Adrenal gland (tissue), 19 donors: ENCODE measurements at regions of chr19 and their contacts with region 1.

Region 1: DNA sequence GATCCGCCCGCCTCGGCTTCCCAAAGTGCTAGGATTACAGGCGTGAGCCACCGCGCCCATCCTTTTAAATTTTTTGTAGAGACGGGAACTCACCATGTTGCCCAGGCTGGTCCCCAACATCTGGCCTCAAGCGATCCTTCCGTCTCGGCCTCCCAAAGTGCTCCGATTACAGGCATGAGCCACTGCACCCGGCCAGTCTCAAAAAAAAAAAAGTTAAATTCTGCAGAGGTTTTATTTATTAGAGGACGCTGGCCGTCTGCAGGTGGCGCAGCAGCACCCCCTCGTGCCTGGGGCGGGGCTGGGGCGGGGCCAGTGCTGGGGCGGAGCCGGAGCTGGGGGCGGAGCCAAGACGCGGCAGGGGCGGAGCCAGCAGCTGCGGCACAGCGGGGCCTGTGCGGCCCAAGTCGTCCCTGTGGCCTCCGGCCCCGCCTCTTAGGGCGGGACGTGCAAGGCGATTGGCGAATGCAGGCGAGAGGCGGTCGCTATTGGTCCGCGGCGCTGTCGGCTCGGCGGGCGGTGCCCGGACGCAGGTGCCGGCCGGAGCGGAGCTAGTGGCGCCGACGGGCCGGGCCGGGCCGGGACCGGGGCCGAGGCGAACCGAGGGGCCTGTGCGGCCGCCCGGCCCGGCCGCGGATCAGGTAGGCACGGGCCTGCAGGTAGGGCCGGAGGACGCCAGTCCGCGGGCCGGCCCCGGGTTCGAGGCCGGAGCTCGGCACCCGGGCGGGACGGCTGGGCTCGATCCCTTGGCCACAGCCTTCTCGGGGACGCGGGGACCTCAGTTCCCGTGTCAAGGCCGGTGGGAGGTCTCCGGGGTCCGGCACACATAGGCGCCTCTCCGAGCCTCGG is at the start of gene MARCHF2:
- DNase-seq: peak; percentile 97 to 98 (median 97)
- H3K4me3 ChIP-seq: peak within 1 kb of the TSS; percentile 27 to 98 (median 62)
- H3K27ac ChIP-seq: peak within 1 kb of the TSS in 2 of 5 donors; percentile 55 to 85
- H3K4me1 ChIP-seq: peaks cover 3 to 31% of the 10 kb centered on the region in 2 donors
- H3K27me3 ChIP-seq: no peaks in the 10 kb centered on the region
- CTCF ChIP-seq: peak; percentile 40 to 67 (median 53)
- POLR2A ChIP-seq: peak in 1 of 2 donors; percentile 74
- total RNA-seq, gene MARCHF2: 18.9 to 200 (median 61.6) TPM

Region 2: DNA sequence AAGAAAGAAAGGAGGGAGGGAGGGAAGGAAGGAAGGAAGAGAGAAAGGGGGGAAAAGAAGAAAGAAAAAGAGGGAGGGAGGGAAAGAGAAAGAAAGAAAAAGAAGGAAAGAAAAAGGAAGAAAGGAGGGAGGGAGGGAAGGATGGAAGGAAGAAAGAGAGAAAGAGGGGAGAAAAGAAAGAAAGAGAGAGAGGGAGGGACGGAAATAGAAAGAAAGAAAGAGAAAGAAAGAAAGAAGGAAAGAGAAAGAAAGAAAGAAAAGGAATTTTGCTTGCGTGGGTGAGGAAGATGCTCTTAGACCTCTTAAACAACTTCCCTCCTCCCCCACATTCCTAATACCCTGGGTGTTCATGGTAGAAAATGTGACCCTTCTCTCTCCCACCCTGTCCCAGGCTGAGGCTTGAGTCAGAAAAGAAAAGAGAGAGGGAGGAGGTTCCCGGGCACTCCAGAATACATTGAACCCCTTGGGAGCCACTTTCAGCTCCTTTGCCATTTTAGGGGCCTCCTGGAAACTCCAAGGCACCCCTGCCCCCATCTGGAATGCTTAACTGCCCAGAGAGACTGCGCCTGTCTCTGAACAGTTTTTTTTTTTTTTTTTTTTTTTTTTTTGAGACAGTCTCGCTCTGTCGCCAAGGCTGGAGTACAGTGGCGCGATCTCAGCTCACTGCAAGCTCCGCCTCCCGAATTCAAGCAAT is 60.7 kb before region 1 on chr19:
- intact Hi-C with region 1: no loop called
- DNase-seq: peak in 1 of 7 donors; percentile 49
- H3K4me3 ChIP-seq: no peak overlapping the region
- H3K27ac ChIP-seq: peak overlapping the region in 1 of 5 donors; percentile 5
- H3K4me1 ChIP-seq: peaks cover 5 to 18% of the 10 kb centered on the region in 2 donors
- H3K27me3 ChIP-seq: no peaks in the 10 kb centered on the region
- CTCF ChIP-seq: no peak
- POLR2A ChIP-seq: no peak

Region 3: DNA sequence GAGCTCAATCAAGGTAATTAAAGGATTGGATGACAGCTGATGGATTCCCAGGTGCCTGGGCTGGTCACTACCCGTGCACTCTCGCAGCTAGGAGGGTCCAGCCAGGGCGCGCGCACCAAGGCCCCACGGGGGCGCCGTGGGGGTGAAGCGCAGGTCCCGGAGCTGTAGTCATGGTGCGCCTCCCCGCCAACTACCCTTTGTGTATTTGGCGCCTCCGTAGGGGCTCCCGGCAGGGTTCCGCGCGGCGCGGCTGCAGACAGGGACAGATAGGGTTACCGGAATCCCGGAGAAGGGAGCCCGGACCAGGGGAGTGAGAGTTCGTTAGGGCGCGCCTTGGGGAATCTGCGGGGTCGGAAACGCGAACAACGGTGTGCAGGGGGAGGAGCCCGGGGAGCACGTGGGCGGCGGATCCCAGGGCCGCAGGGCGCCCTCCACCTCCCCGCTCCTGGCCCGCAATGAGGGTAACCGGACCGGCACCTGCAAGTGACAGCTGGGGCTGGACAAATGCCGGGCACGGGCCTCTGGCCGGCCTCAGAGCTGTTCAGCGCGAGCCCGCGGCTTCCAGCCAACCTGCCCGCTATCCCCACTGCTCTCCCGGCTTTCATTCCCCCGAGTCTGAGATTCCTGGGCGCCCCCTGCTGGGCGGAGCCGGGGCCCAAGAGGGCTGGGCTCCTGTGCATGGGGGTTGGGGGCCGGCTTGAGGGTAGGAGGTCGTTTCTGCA is 92.8 kb after region 1 on chr19:
- intact Hi-C with region 1: loop called (anchors 5 kb)
- DNase-seq: peak; percentile 72 to 87 (median 84)
- H3K4me3 ChIP-seq: peak overlapping the region in 2 of 4 donors; percentile 60 to 62
- H3K27ac ChIP-seq: peak overlapping the region in 2 of 5 donors; percentile 6 to 24
- H3K4me1 ChIP-seq: peaks cover 11 to 12% of the 10 kb centered on the region in 2 donors
- H3K27me3 ChIP-seq: no peaks in the 10 kb centered on the region
- CTCF ChIP-seq: peak; percentile 75 to 88 (median 86)
- POLR2A ChIP-seq: no peak

Region 4: DNA sequence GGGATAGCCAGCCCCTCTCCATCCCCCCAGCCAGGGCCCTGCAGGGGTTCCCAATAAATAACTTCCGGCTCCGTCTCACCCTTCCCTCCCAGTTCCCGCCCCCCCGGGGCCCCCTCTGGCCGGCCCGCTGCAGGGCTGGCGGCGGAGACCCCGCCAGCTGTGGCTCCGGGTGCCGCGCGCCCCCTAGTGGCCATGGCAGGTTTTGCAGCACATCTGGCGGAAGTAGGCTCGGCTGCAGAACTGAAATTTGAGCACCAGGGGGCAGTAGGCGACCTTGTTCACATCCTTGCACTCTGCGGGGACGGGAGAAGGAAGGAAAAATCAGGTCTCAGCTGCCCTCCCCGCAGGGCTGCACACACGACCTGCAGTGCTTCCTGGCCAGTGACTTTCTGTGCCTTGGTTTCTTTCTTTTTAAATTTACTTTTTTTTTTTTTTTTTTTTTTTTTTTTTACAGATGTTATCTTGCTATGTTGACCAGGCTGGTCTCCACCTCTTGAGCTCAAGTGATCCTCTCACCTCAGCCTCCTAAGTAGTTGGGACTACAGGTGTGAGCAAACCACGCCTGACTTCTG is 167.8 kb after region 1 on chr19:
- intact Hi-C with region 1: loop called in 1 of 2 experiments (anchors 10 kb)
- DNase-seq: peak; percentile 77 to 89 (median 85)
- H3K4me3 ChIP-seq: no peak overlapping the region
- H3K27ac ChIP-seq: no peak overlapping the region
- H3K4me1 ChIP-seq: no peaks in the 10 kb centered on the region
- H3K27me3 ChIP-seq: no peaks in the 10 kb centered on the region
- CTCF ChIP-seq: peak; percentile 97 to 100 (median 98)
- POLR2A ChIP-seq: no peak